Activated T-helper 2 cell treated with anti-CD3 and anti-CD28 coated beads, Interferon-gamma antibody, Interleukin-2, Interleukin-4, amounts not matched to agents 10 μg/mL and 5 μg/mL and 100 μg/mL, durations not matched to agents 14 hours and 24 hours and 36 hours (primary cell): ENCODE measurements at regions of chr2 and their contacts with region 1.

Region 1: GRCh38 chr2:84939426-84940087 is 31.4 kb upstream of the KCMF1 start:
- DNase-seq: peak; percentile 85
- H3K4me3 Mint-ChIP-seq: peak overlapping the region; percentile 72
- H3K27ac Mint-ChIP-seq: peak overlapping the region; percentile 98
- H3K4me1 Mint-ChIP-seq: peaks cover 50% of the 10 kb centered on the region
- H3K27me3 Mint-ChIP-seq: no peaks in the 10 kb centered on the region

Region 2: GRCh38 chr2:84631047-84631446 is 308.5 kb before region 1 on chr2:
- intact Hi-C with region 1: no loop called
- DNase-seq: no peak
- H3K4me3 Mint-ChIP-seq: no peak overlapping the region
- H3K27ac Mint-ChIP-seq: no peak overlapping the region
- H3K4me1 Mint-ChIP-seq: peaks cover 6% of the 10 kb centered on the region
- H3K27me3 Mint-ChIP-seq: peaks cover 14% of the 10 kb centered on the region

Region 3: GRCh38 chr2:84870306-84870705 is 69.3 kb before region 1 on chr2:
- intact Hi-C with region 1: no loop called
- DNase-seq: no peak
- H3K4me3 Mint-ChIP-seq: no peak overlapping the region
- H3K27ac Mint-ChIP-seq: no peak overlapping the region
- H3K4me1 Mint-ChIP-seq: peaks cover 46% of the 10 kb centered on the region
- H3K27me3 Mint-ChIP-seq: no peaks in the 10 kb centered on the region

Region 4: GRCh38 chr2:84888401-84889276 is 50.9 kb before region 1 on chr2:
- intact Hi-C with region 1: loop called (anchors 2 kb)
- DNase-seq: peak; percentile 53
- H3K4me3 Mint-ChIP-seq: peak overlapping the region; percentile 57
- H3K27ac Mint-ChIP-seq: peak overlapping the region; percentile 92
- H3K4me1 Mint-ChIP-seq: peaks cover 39% of the 10 kb centered on the region
- H3K27me3 Mint-ChIP-seq: no peaks in the 10 kb centered on the region

Region 5: GRCh38 chr2:84905181-84906107 is 34.1 kb before region 1 on chr2 and contains the start of gene TMSB10:
- intact Hi-C with region 1: loop called (anchors 5 kb)
- DNase-seq: peak; percentile 90
- H3K4me3 Mint-ChIP-seq: peak within 1 kb of the TSS; percentile 83
- H3K27ac Mint-ChIP-seq: peak within 1 kb of the TSS; percentile 76
- H3K4me1 Mint-ChIP-seq: peaks cover 46% of the 10 kb centered on the region
- H3K27me3 Mint-ChIP-seq: no peaks in the 10 kb centered on the region
- total RNA-seq, gene TMSB10: 2,676 and 2,847 TPM in 2 replicates

Region 6: DNA sequence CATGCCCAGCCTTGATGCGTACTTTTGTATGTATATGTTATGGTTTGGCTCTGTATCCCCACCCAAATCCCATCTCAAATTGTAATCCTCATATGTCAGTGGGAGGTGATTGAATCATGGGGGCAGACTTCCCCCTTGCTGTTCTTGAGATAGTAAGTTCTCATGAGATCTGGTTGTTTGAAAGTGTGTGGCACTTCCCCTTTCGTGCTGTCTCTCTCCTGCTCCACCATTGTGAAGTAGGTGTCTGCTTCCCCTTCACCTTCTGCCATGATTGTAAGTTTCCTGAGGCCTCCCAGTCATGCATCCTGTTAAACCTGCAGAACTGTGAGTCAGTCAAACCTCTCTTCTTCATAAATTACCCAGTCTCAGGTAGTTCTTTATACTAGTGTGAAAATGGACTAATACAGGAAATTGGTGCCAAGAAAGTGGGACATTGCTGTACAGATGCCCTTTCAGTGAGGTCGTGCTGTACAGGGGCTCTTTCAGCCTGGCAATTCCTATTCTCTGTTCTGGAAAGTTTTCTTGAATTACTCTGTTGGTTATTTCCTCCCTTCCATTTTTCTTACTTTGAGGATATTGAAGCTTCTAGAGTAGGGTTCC is 69.6 kb after region 1 on chr2:
- intact Hi-C with region 1: loop called (anchors 2 kb)
- DNase-seq: no peak
- H3K4me3 Mint-ChIP-seq: no peak overlapping the region
- H3K27ac Mint-ChIP-seq: peak overlapping the region; percentile 38
- H3K4me1 Mint-ChIP-seq: peaks cover 51% of the 10 kb centered on the region
- H3K27me3 Mint-ChIP-seq: no peaks in the 10 kb centered on the region

Region 7: GRCh38 chr2:85148182-85148581 is 208.6 kb after region 1 on chr2:
- intact Hi-C with region 1: no loop called
- DNase-seq: no peak
- H3K4me3 Mint-ChIP-seq: no peak overlapping the region
- H3K27ac Mint-ChIP-seq: no peak overlapping the region
- H3K4me1 Mint-ChIP-seq: peaks cover 5% of the 10 kb centered on the region
- H3K27me3 Mint-ChIP-seq: peaks cover 11% of the 10 kb centered on the region